ENCODE measurements at regions of chr19 and their contacts with region 1.

Region 1: GRCh38 chr19:5170329-5170745 is 170.3 kb downstream of the PTPRS start:
- DNase-seq: no peak
- H3K4me3 ChIP-seq: no peak overlapping the region
- H3K27ac ChIP-seq: peak overlapping the region; percentile 100
- H3K4me1 ChIP-seq: peaks cover 36% of the 10 kb centered on the region
- H3K27me3 ChIP-seq: no peaks in the 10 kb centered on the region
- CTCF ChIP-seq: peak; percentile 67

Region 2: GRCh38 chr19:5261188-5261890 is 91.0 kb after region 1 on chr19:
- CTCF ChIA-PET with region 1: no interaction called
- POLR2A ChIA-PET with region 1: no interaction called
- intact Hi-C with region 1: loop called (anchors 10 kb)
- DNase-seq: peak; percentile 68 to 78
- H3K4me3 ChIP-seq: no peak overlapping the region
- H3K27ac ChIP-seq: no peak overlapping the region
- H3K4me1 ChIP-seq: peaks cover 19% of the 10 kb centered on the region
- H3K27me3 ChIP-seq: no peaks in the 10 kb centered on the region
- CTCF ChIP-seq: no peak

Region 3: GRCh38 chr19:5557691-5558090 is 387.4 kb after region 1 on chr19:
- CTCF ChIA-PET with region 1: no interaction called
- POLR2A ChIA-PET with region 1: no interaction called
- intact Hi-C with region 1: no loop called
- DNase-seq: no peak
- H3K4me3 ChIP-seq: no peak overlapping the region
- H3K27ac ChIP-seq: no peak overlapping the region
- H3K4me1 ChIP-seq: no peaks in the 10 kb centered on the region
- H3K27me3 ChIP-seq: no peaks in the 10 kb centered on the region
- CTCF ChIP-seq: no peak